Testis (tissue), 5 donors: ENCODE measurements at regions of chr16 and their contacts with region 1.

Region 1: GRCh38 chr16:4288148-4288921 is 15.5 kb upstream of the TFAP4 start:
- DNase-seq: peak; percentile 78
- H3K4me3 ChIP-seq: no peak overlapping the region
- H3K27ac ChIP-seq: no peak overlapping the region
- H3K4me1 ChIP-seq: peaks cover 9% of the 10 kb centered on the region
- H3K27me3 ChIP-seq: no peaks in the 10 kb centered on the region
- CTCF ChIP-seq: peak; percentile 69 to 91 (median 75)
- POLR2A ChIP-seq: no peak

Region 2: GRCh38 chr16:4328046-4328503 is 39.7 kb after region 1 on chr16:
- intact Hi-C with region 1: loop called (anchors 5 kb)
- DNase-seq: peak; percentile 89
- H3K4me3 ChIP-seq: peak overlapping the region; percentile 58 to 64
- H3K27ac ChIP-seq: peak overlapping the region; percentile 71 to 82
- H3K4me1 ChIP-seq: peaks cover 43% of the 10 kb centered on the region
- H3K27me3 ChIP-seq: no peaks in the 10 kb centered on the region
- CTCF ChIP-seq: peak; percentile 36 to 50 (median 46)
- POLR2A ChIP-seq: no peak